Heart right ventricle (tissue), 16 donors: ENCODE measurements at regions of chr16 and their contacts with region 1.

Region 1: DNA sequence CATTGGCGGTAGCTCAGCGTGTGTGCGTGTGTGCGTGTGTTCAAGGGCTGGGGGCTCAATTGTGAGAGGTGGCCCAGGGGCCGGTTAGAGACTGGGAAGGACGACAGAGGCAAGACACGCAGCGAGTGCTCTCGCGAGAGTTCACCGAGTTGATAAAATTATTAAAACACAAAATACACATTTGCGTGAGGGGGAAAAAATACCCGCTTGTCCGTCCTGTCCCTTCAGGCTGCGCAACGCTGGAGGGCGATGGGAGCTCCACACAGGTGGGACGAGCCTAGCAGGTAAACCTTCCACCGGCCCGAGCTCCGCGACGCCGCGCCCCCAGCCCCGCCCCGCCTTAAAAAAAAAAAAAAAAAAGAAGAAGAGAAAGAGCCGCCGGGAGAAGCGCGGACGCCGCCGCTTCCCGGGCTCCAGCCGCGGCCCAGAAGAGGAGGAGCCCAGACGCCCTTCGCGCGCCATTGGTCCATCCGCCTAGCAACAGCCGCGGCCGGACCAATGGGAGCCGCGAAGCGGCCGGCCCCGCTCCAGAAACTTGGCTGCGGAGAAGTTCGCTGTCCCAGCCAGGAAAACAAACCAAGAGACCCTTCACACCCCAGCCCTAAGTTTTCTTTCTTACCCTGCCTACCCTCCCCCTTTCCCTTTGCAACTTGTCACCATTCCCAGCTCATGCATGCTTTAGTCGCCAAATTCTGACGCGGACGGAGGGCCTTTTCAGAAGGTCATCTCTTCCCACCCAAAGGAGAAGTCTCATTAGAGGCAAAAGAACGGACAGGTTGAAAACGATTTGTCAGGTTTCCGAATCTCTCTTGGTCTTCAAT is 169.9 kb upstream of the MAF start:
- DNase-seq: peak; percentile 88 to 91
- ATAC-seq: peak; percentile 98 to 99 (median 99)
- H3K4me3 ChIP-seq: peak overlapping the region; percentile 12 to 69 (median 65)
- H3K27ac ChIP-seq: peak overlapping the region; percentile 20 to 80 (median 68)
- H3K4me1 ChIP-seq: peaks cover 0 to 37% (median 22%) of the 10 kb centered on the region in 9 donors
- H3K27me3 ChIP-seq: no peaks in the 10 kb centered on the region
- CTCF ChIP-seq: no peak

Region 2: DNA sequence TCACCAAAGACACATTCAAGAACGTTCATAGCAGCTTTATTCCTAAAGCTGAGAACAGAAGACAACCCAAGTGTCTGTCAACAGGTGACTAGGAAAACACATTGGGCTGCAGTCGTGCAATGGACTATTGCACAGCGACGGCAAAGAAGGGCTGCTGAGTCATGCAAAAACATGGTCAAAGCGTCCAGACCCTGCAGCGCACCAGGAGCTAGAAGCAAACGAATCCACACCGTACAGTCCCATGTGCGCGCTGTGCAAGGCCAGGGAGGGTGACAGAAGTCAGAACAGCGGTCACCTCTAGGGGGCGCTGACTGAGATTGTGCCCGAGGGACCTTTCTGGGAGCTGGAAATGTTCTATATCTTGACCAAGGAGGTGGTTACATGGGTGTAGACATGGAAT is 436.3 kb before region 1 on chr16:
- intact Hi-C with region 1: no loop called
- DNase-seq: no peak
- ATAC-seq: no peak
- H3K4me3 ChIP-seq: no peak overlapping the region
- H3K27ac ChIP-seq: no peak overlapping the region
- H3K4me1 ChIP-seq: no peaks in the 10 kb centered on the region
- H3K27me3 ChIP-seq: peaks cover 0 to 1% (median 0%) of the 10 kb centered on the region in 7 donors
- CTCF ChIP-seq: peak in 7 of 9 donors; percentile 15 to 45 (median 22)

Region 3: DNA sequence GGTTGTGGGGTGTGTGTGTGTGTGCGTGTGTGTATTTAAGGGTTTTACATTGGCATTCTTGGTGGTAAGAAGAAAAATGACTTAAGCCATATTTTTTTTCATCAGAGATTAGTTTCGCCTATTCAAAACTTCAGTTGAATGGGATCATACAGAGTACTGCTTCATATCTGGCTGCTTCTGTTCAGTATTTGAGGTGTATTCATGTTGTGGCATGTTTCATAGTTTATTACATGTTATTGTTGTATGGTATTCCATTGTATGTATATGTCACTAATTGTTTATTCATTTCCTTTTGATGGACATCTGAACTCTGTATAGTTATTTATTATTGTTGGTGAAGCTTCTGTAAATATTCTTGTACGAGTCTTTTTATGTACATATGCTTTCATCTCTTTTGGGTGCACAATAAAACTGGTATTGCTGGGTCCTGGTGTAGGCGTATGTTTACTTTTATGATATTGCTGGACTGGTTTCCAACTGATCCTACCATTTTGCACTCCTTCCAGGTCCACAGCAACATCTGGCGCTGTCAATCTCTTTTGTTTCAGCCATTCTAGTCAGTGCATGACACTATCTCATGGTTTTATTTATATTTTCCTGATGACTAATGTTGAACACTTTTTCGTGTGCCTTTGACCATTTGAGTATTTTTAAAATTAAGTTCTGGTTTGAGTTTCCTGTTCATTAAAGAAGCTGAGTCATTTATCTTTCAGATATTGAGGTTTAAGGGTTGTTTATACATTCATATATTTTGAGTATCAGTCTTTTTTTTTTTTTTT is 92.5 kb before region 1 on chr16:
- intact Hi-C with region 1: no loop called
- DNase-seq: no peak
- ATAC-seq: no peak
- H3K4me3 ChIP-seq: no peak overlapping the region
- H3K27ac ChIP-seq: no peak overlapping the region
- H3K4me1 ChIP-seq: no peaks in the 10 kb centered on the region
- H3K27me3 ChIP-seq: no peaks in the 10 kb centered on the region
- CTCF ChIP-seq: no peak

Region 4: GRCh38 chr16:79838496-79839259 is 68.2 kb after region 1 on chr16:
- intact Hi-C with region 1: loop called in 1 of 10 experiments (anchors 10 kb)
- DNase-seq: no peak
- ATAC-seq: peak in 5 of 8 donors; percentile 26 to 59 (median 52)
- H3K4me3 ChIP-seq: no peak overlapping the region
- H3K27ac ChIP-seq: no peak overlapping the region
- H3K4me1 ChIP-seq: peaks cover 0 to 16% (median 3%) of the 10 kb centered on the region in 9 donors
- H3K27me3 ChIP-seq: no peaks in the 10 kb centered on the region
- CTCF ChIP-seq: no peak

Region 5: GRCh38 chr16:80065568-80065967 is 295.1 kb after region 1 on chr16:
- intact Hi-C with region 1: no loop called
- DNase-seq: no peak
- ATAC-seq: no peak
- H3K4me3 ChIP-seq: no peak overlapping the region
- H3K27ac ChIP-seq: no peak overlapping the region
- H3K4me1 ChIP-seq: peaks cover 0 to 4% (median 0%) of the 10 kb centered on the region in 9 donors
- H3K27me3 ChIP-seq: peaks cover 0 to 4% (median 0%) of the 10 kb centered on the region in 7 donors
- CTCF ChIP-seq: no peak

Region 6: DNA sequence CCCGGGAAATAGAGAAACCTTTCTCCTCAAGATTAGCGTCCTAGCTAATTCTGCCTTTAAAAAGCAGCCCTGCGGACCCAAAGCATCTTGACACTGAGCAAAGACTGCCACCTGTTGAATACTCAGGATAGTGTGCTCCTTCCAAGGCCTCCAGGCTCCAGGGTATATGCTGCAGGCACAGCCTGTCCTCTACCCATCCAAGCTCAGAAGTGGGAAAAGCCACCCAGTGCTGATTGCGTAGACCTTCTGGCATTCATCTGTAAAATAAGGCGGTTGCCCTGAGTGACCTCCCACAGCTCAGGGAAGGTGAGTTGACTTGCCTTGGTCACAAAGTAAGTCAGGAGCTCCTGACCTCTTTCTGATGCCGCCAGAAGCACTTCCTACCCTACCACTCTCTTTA is 314.2 kb after region 1 on chr16:
- intact Hi-C with region 1: loop called in 2 of 10 experiments (anchors 5 kb)
- DNase-seq: peak; percentile 10 to 46
- ATAC-seq: peak; percentile 59 to 97 (median 90)
- H3K4me3 ChIP-seq: no peak overlapping the region
- H3K27ac ChIP-seq: no peak overlapping the region
- H3K4me1 ChIP-seq: peaks cover 0 to 4% (median 0%) of the 10 kb centered on the region in 9 donors
- H3K27me3 ChIP-seq: no peaks in the 10 kb centered on the region
- CTCF ChIP-seq: peak; percentile 37 to 74 (median 66)

Region 7: DNA sequence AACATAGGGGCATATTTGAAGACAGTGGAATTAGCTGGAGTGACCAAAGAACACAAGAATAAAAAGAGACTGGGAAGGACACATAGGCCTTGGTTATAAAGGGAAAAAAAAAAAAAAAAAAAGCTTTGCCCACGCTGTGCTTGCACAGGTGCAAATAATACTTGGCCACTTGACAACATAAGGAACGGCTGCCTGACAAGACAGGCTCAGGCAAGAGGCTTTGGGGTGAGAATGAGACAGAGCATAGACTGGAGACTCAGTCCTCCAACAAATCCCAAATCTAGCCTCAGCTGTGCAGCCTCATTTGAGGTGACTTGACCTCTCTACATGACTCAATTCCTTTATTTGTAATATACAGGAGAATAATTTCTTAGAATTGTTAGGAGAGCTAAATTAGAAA is 437.6 kb after region 1 on chr16:
- intact Hi-C with region 1: no loop called
- DNase-seq: no peak
- ATAC-seq: no peak
- H3K4me3 ChIP-seq: no peak overlapping the region
- H3K27ac ChIP-seq: no peak overlapping the region
- H3K4me1 ChIP-seq: no peaks in the 10 kb centered on the region
- H3K27me3 ChIP-seq: peaks cover 0 to 3% (median 0%) of the 10 kb centered on the region in 7 donors
- CTCF ChIP-seq: no peak

Region 8: DNA sequence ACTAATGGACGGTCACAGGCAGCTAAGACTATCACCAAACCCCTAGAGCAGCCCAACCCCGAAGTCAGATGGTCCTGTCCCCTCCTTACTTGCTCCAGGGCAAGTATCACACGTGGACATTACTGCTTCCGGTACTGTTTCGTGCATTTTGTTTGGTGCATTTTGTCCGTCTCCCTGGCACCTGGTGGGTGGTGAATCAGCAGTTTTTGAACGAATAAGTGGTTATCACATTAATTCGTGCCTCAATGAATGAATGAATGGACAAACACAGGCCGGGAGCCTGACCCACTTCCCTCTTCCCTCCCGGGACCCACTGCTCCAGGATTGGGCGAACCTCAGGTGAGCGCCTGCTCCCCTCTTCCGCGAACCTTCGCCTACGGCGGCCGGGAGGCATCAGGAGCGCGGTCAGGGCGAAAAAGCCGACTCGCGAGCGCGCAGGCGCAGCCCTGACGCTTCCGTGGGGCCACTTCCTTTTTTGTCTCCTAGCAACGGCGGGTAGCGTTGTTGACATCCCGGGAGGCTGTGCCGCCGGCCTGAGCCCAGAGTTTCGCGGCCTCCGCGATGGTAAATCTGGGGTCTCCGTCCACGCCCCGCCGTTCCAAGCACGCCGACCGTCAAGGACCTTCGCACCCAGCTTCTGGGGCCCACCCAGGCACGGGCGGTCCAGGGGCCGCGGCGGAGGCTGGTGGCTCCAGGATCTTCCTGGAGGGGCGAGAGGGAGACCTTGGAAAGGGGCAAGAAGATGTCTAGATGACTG is 770.2 kb after region 1 on chr16 and contains the start of gene DYNLRB2:
- intact Hi-C with region 1: loop called in 1 of 10 experiments (anchors 10 kb)
- DNase-seq: peak; percentile 94
- ATAC-seq: peak; percentile 97 to 100 (median 98)
- H3K4me3 ChIP-seq: peak within 1 kb of the TSS; percentile 48 to 76 (median 68)
- H3K27ac ChIP-seq: peak within 1 kb of the TSS in 8 of 10 donors; percentile 21 to 85 (median 40)
- H3K4me1 ChIP-seq: peaks cover 0 to 15% (median 5%) of the 10 kb centered on the region in 9 donors
- H3K27me3 ChIP-seq: peaks cover 0 to 29% (median 11%) of the 10 kb centered on the region in 7 donors
- CTCF ChIP-seq: no peak
- total RNA-seq, gene DYNLRB2: 0.69 to 0.77 (median 0.71) TPM in 3 of 10 donors, not detected in the others